CD8-positive, alpha-beta memory T cell (primary cell): ENCODE measurements at regions of chr16 and their contacts with region 1.

Region 1: DNA sequence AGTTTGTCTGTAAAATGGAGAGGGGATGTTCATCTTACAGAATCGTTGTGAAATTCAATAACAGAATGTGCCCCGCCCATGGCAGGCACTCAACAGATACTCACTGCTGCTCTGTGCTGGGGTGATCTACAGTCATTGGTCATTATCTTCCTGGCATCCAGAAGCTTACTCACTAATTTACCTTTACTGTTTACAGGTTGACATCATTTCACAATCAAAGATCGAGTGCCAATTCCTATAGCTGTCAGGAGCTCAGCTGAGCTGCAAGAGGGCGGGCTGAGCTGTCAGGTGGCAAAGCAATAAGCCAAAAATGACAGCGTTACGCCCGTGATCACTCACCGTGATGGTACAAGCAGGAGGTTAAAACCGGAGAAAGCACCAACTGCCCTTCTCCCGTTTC is 51.2 kb downstream of the LITAF start:
- DNase-seq: no peak
- H3K4me3 ChIP-seq: no peak overlapping the region
- H3K4me3 Mint-ChIP-seq: peak overlapping the region in 1 of 7 donors; percentile 36
- H3K27ac ChIP-seq: no peak overlapping the region
- H3K27ac Mint-ChIP-seq: peak overlapping the region in 3 of 8 donors; percentile 26 to 90 (median 47)
- H3K4me1 ChIP-seq: peaks cover 3% of the 10 kb centered on the region
- H3K4me1 Mint-ChIP-seq: peaks cover 22 to 44% (median 26%) of the 10 kb centered on the region in 3 donors
- H3K27me3 ChIP-seq: no peaks in the 10 kb centered on the region
- H3K27me3 Mint-ChIP-seq: peaks cover 0 to 3% of the 10 kb centered on the region in 2 donors

Region 2: GRCh38 chr16:11345040-11345862 is 190.2 kb before region 1 on chr16 and contains the start of gene RMI2:
- CTCF ChIA-PET with region 1: no interaction called
- POLR2A ChIA-PET with region 1: no interaction called
- DNase-seq: peak; percentile 92 to 96 (median 94)
- H3K4me3 ChIP-seq: peak within 1 kb of the TSS; percentile 76
- H3K4me3 Mint-ChIP-seq: peak within 1 kb of the TSS; percentile 71 to 92 (median 86)
- H3K27ac ChIP-seq: no peak within 1 kb of the TSS
- H3K27ac Mint-ChIP-seq: peak within 1 kb of the TSS in 5 of 8 donors; percentile 5 to 68 (median 20)
- H3K4me1 ChIP-seq: peaks cover 4% of the 10 kb centered on the region
- H3K4me1 Mint-ChIP-seq: peaks cover 4 to 9% (median 7%) of the 10 kb centered on the region in 3 donors
- H3K27me3 ChIP-seq: no peaks in the 10 kb centered on the region
- H3K27me3 Mint-ChIP-seq: peaks cover 0 to 5% of the 10 kb centered on the region in 2 donors
- total RNA-seq, gene RMI2: 37.0 to 38.3 TPM

Region 3: GRCh38 chr16:11520442-11520841 is 15.0 kb before region 1 on chr16:
- CTCF ChIA-PET with region 1: interaction called, 13 read pairs
- POLR2A ChIA-PET with region 1: no interaction called
- DNase-seq: no peak
- H3K4me3 ChIP-seq: no peak overlapping the region
- H3K4me3 Mint-ChIP-seq: no peak overlapping the region
- H3K27ac ChIP-seq: no peak overlapping the region
- H3K27ac Mint-ChIP-seq: no peak overlapping the region
- H3K4me1 ChIP-seq: no peaks in the 10 kb centered on the region
- H3K4me1 Mint-ChIP-seq: no peaks in the 10 kb centered on the region
- H3K27me3 ChIP-seq: no peaks in the 10 kb centered on the region
- H3K27me3 Mint-ChIP-seq: no peaks in the 10 kb centered on the region

Region 4: DNA sequence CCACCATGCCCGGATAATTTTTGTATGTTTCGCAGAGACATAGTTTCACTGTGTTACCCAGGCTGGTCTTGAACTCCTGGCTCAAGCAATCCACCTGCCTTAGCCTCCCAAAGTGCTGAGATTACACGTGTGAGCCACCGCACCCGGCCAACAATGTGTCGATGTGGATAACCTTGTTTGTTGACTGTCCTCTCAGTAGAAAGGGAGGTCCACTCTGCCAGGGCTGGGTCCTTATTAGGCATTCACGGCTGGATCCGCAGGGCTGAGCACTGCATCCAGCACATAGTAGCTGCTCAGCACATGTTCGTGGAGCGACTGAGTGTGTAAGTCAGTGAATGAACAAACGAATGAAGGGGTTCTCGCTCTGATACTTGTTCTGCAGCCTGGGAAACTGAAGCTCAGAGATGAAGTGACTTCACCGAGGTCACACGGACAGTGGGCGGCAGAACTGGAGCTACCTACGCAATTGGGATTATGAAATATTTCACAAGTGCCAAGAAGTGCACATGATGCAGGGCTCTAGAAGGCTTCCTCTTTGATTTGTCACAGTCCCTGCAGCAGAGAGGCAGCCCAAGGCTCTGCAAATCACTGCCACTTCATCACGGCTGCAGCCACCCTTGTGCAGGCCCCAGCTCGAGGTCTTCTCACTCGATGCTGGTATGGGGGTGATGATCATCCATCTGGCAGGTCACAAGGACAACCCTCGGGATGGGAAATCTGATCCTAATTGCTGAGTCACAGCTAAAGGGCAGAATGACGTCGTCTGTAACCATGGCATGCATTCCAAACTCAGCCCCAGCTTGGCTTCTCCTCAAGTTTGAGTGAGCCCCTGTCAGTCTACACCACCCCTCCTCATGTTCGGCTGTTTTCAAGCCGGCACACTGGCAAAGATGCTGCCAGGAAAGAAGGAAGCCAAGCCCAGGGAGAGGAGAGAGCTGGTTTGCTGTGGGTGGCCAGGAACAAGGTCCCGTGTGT is 104.7 kb after region 1 on chr16:
- CTCF ChIA-PET with region 1: interaction called, 70 read pairs
- POLR2A ChIA-PET with region 1: no interaction called
- DNase-seq: no peak
- H3K4me3 ChIP-seq: no peak overlapping the region
- H3K4me3 Mint-ChIP-seq: peak overlapping the region in 1 of 7 donors; percentile 26
- H3K27ac ChIP-seq: no peak overlapping the region
- H3K27ac Mint-ChIP-seq: peak overlapping the region in 5 of 8 donors; percentile 23 to 80 (median 43)
- H3K4me1 ChIP-seq: peaks cover 16% of the 10 kb centered on the region
- H3K4me1 Mint-ChIP-seq: peaks cover 17 to 21% (median 20%) of the 10 kb centered on the region in 3 donors
- H3K27me3 ChIP-seq: no peaks in the 10 kb centered on the region
- H3K27me3 Mint-ChIP-seq: peaks cover 0 to 5% of the 10 kb centered on the region in 2 donors

Region 5: DNA sequence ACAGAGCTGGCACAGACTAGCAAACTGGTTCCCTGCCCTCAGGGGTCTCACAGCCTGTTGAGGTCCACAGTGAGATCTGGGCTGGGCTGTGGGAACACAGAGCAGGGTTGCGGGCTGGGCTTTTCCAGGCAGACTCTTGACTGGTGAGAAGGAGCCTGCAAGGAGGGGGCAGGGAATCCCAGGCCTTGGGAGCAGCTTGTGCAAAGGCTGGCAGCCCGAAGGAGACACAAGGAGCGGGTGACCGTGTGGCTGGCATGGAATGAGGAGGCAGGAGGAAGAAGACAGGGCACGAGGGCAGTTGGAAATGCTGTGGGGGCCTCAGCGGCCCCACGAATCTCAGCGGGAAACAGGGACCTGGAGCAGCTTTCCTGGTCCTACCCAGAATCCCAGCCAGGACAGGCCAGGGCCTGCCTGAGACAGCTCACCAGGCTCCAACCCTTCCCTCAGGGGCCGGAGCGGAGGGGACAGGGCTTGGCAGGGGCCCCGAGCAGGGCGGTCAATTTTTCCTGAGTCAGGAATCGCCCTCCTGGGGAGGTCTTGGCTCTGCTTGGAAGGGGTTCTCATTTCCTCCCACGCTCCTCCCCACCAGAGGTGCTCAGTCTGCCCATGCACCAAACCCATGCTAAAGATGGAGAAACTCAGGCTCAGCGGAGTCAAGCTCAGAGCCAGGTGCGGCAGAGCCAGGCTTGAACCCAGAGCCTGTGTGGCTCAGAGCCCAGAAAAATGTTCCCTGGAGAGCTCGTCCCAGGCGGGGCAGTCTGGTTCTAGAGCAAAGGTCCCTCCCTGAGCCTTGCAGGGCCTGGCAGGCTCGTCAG is 123.6 kb after region 1 on chr16:
- CTCF ChIA-PET with region 1: interaction called, 11 read pairs
- POLR2A ChIA-PET with region 1: no interaction called
- DNase-seq: no peak
- H3K4me3 ChIP-seq: no peak overlapping the region
- H3K4me3 Mint-ChIP-seq: no peak overlapping the region
- H3K27ac ChIP-seq: no peak overlapping the region
- H3K27ac Mint-ChIP-seq: no peak overlapping the region
- H3K4me1 ChIP-seq: peaks cover 20% of the 10 kb centered on the region
- H3K4me1 Mint-ChIP-seq: peaks cover 6 to 11% (median 10%) of the 10 kb centered on the region in 3 donors
- H3K27me3 ChIP-seq: no peaks in the 10 kb centered on the region
- H3K27me3 Mint-ChIP-seq: no peaks in the 10 kb centered on the region

Region 6: DNA sequence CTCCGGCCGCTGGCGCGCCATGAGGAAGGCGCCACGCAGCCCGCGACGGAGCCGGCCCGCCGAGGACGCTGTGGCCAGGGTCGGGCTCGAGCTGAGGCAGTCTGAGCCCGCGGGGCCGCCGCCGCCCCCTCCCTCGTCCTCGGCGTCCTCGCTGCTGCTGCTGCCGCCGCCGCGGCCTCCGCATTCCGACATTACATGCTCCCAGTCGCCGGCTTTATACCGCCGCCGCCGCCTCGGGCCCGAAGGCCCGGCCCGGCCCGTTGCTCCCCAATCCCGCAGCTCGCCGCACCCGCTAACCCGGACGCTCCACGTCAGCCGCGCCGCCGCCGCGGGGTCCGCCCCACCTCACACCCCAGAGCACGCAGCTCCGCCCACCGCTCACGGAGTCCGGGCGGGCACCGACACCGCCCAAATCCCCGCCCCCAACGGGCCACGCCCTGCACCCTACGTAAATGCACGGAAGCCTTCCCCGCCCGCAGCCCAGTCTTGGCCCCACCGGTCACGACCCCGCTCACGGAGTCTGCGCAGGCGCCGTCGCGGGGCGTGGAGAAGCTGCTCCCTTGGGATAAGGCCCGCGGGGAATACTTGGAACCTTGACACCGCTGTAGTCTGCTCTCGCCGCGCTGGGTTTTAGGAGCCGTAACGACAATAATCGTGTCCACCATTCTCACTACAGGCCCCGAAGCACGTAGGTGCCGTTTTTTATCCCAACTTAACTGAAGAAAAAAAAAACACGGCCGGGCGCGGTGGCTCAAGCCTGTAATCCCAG is 207.3 kb after region 1 on chr16 and contains the start of gene TXNDC11:
- CTCF ChIA-PET with region 1: interaction called, 10 read pairs
- POLR2A ChIA-PET with region 1: no interaction called
- DNase-seq: peak; percentile 99 to 100 (median 100)
- H3K4me3 ChIP-seq: peak within 1 kb of the TSS; percentile 91
- H3K4me3 Mint-ChIP-seq: peak within 1 kb of the TSS; percentile 92 to 96 (median 94)
- H3K27ac ChIP-seq: peak within 1 kb of the TSS; percentile 91
- H3K27ac Mint-ChIP-seq: peak within 1 kb of the TSS; percentile 95 to 99 (median 98)
- H3K4me1 ChIP-seq: peaks cover 48% of the 10 kb centered on the region
- H3K4me1 Mint-ChIP-seq: peaks cover 50 to 57% (median 51%) of the 10 kb centered on the region in 3 donors
- H3K27me3 ChIP-seq: no peaks in the 10 kb centered on the region
- H3K27me3 Mint-ChIP-seq: no peaks in the 10 kb centered on the region
- total RNA-seq, gene TXNDC11: 32.8 to 38.8 TPM